ENCODE measurements at regions of chr13 and their contacts with region 1.

Region 1: DNA sequence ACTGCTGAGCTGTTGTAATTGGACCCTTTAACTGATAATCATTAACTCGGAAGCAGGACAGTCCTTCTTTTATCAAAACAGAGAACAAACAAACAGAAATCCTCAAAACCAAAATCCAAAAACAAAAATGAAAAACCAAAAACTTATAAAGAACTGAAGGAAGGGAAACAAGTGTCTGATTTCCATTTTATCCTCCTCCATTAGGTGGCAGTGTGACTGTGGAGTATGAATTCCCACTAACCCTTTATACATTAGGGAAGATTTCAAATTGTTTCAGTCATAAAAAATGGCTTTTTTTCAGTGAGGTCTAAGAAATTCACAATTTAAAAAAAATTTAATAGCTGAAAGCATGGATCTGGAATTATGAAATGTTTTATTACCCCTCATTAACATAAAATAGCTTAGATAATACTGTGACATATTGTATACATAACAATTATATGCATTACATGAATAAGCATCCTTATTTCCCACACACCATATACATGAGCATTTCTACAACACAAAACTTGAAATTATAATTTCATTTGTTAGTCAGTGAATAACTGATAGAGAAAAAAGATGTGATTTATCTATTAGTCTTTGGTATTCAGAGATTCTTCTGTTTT is 1074.3 kb upstream of the PCDH9 start:
- DNase-seq: no peak
- ATAC-seq: peak; percentile 66
- H3K4me3 ChIP-seq: no peak overlapping the region
- H3K27ac ChIP-seq: no peak overlapping the region
- H3K4me1 ChIP-seq: no peaks in the 10 kb centered on the region
- H3K27me3 ChIP-seq: no peaks in the 10 kb centered on the region
- CTCF ChIP-seq: peak; percentile 46 to 60 (median 55); a peak in 5 of 6 replicates
- EP300 ChIP-seq: no peak
- POLR2A ChIP-seq: no peak
- RAD21 ChIP-seq: peak; percentile 67

Region 2: GRCh38 chr13:68345963-68346531 is 41.7 kb after region 1 on chr13:
- CTCF ChIA-PET with region 1: no interaction called
- POLR2A ChIA-PET with region 1: no interaction called
- RAD21 ChIA-PET with region 1: no interaction called
- SMC1A ChIA-PET with region 1: no interaction called
- in situ Hi-C with region 1: no loop called
- intact Hi-C with region 1: no loop called
- DNase-seq: no peak
- ATAC-seq: no peak
- H3K4me3 ChIP-seq: no peak overlapping the region
- H3K27ac ChIP-seq: no peak overlapping the region
- H3K4me1 ChIP-seq: no peaks in the 10 kb centered on the region
- H3K27me3 ChIP-seq: no peaks in the 10 kb centered on the region
- CTCF ChIP-seq: no peak
- EP300 ChIP-seq: no peak
- POLR2A ChIP-seq: no peak
- RAD21 ChIP-seq: no peak

Region 3: GRCh38 chr13:68927387-68928026 is 623.1 kb after region 1 on chr13:
- CTCF ChIA-PET with region 1: interaction called, 13 read pairs
- POLR2A ChIA-PET with region 1: no interaction called
- RAD21 ChIA-PET with region 1: interaction called, 5 read pairs
- SMC1A ChIA-PET with region 1: interaction called, 5 read pairs
- in situ Hi-C with region 1: loop called (anchors 25 kb)
- intact Hi-C with region 1: loop called (anchors 1 kb)
- DNase-seq: no peak
- ATAC-seq: peak; percentile 76
- H3K4me3 ChIP-seq: no peak overlapping the region
- H3K27ac ChIP-seq: no peak overlapping the region
- H3K4me1 ChIP-seq: no peaks in the 10 kb centered on the region
- H3K27me3 ChIP-seq: no peaks in the 10 kb centered on the region
- CTCF ChIP-seq: peak; percentile 29 to 61 (median 58); a peak in 4 of 6 replicates
- EP300 ChIP-seq: no peak
- POLR2A ChIP-seq: no peak
- RAD21 ChIP-seq: peak; percentile 65

Region 4: DNA sequence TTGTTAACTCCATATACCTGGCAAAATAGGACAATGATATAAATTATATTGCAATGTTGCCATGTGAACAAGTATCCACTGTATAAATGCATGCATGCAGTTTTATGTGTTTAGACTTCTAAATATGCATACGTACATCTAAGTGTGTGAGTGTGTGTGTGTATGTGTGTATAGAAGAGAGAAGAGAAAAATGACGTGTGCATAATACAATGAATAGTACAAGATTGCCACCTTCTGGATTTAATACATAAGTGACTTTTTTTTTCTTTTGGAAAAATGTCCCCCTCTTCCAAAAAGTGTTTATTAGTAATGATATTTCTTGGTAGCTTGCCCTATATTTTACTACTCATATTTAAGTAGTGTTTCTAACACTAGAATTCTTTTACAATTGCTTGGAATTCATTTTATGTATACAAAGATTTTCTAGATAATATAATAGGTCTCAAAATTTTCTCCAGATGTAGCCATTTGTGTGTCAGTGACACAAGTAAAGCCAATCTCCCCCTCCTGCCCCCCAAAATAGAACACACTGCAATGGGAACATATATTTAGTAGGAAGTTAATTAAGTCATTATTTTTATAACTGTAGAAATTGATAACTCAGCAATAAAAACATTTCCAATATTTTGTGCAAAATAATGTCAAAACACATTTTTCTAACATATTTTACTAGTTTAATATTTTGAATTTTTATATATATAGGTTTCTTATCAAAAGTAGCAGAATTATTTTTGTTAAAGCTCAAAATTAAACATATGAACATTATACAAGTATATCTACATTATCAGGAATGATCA is 1019.9 kb after region 1 on chr13:
- CTCF ChIA-PET with region 1: interaction called, 4 read pairs
- POLR2A ChIA-PET with region 1: no interaction called
- RAD21 ChIA-PET with region 1: no interaction called
- SMC1A ChIA-PET with region 1: no interaction called
- in situ Hi-C with region 1: no loop called
- intact Hi-C with region 1: loop called (anchors 5 kb)
- DNase-seq: no peak
- ATAC-seq: peak; percentile 30; the same call in 1 of the 3 replicates
- H3K4me3 ChIP-seq: no peak overlapping the region
- H3K27ac ChIP-seq: no peak overlapping the region
- H3K4me1 ChIP-seq: no peaks in the 10 kb centered on the region
- H3K27me3 ChIP-seq: no peaks in the 10 kb centered on the region
- CTCF ChIP-seq: no peak; a peak in 2 of 6 replicates
- EP300 ChIP-seq: no peak
- POLR2A ChIP-seq: no peak
- RAD21 ChIP-seq: peak; percentile 48

Region 5: DNA sequence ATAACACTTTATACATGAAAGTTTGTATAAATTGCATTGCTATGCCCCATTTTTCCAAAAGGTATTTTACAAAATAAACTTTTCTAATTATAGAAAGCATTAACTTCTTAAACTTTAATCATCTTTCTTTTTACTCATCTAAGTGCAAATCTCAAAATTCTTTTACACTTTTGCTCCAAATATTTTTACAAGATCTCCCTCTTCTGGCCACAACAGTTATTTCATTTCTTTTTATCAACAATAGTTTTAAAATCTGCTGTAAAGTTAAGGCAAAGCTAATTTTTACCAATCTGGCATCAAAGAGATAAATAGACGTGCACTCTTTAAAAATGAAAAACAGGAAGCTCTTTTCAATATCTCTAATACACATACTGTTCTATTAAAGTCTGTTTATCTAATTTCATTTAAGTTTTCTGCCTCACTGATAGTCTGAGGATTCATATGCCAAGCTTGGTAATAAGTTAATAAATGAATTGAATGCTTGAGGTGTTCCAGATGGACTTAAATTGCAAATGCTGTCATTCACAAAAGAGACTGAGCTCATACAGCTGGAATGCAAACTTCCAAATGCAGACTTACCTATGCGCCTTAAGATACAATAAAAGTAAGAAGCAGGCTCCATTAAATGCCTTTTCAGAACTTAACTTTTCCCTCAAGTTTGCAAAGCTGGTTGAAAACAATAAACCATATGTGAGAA is 1220.2 kb after region 1 on chr13:
- CTCF ChIA-PET with region 1: no interaction called
- POLR2A ChIA-PET with region 1: no interaction called
- RAD21 ChIA-PET with region 1: no interaction called
- SMC1A ChIA-PET with region 1: no interaction called
- in situ Hi-C with region 1: no loop called
- intact Hi-C with region 1: loop called (anchors 10 kb)
- DNase-seq: no peak
- ATAC-seq: no peak
- H3K4me3 ChIP-seq: no peak overlapping the region
- H3K27ac ChIP-seq: no peak overlapping the region
- H3K4me1 ChIP-seq: no peaks in the 10 kb centered on the region
- H3K27me3 ChIP-seq: no peaks in the 10 kb centered on the region
- CTCF ChIP-seq: peak in 1 of 3 experiments; percentile 6; a peak in 2 of 6 replicates
- EP300 ChIP-seq: no peak
- POLR2A ChIP-seq: no peak
- RAD21 ChIP-seq: no peak

Region 6: DNA sequence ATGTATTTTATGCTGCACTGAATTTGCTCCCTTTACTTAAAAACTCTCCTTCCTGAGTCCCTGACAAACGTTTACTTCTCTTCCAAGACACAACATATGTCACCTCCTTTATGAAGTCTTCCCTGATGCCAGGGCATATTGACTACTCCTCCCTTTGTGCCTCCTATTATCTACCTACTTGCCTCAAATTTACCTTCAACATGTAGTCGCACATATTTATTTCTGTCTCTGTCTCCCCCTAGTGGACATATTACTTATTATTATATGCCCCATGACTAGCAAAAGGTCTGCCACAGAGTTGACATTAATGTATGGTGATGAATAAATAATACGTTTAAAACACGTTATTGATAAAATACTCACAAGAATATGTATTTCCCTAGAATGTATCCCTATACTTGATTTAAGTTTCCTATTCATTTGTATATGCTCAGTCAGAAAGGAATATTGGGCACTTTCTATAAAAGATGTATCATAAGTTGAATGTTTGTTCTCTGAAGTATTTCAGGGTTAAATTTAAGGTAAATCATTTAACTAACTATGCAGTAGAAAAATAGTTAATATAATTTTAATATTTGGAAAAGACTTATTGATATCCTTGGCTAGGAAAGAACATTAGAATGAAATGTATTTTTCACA is 1552.9 kb after region 1 on chr13:
- CTCF ChIA-PET with region 1: no interaction called
- POLR2A ChIA-PET with region 1: no interaction called
- RAD21 ChIA-PET with region 1: no interaction called
- SMC1A ChIA-PET with region 1: no interaction called
- in situ Hi-C with region 1: no loop called
- intact Hi-C with region 1: loop called (anchors 5 kb)
- DNase-seq: peak; percentile 19
- ATAC-seq: peak; percentile 88
- H3K4me3 ChIP-seq: no peak overlapping the region
- H3K27ac ChIP-seq: no peak overlapping the region
- H3K4me1 ChIP-seq: no peaks in the 10 kb centered on the region
- H3K27me3 ChIP-seq: no peaks in the 10 kb centered on the region
- CTCF ChIP-seq: peak; percentile 50 to 65 (median 54); a peak in 5 of 6 replicates
- EP300 ChIP-seq: no peak
- POLR2A ChIP-seq: no peak
- RAD21 ChIP-seq: peak; percentile 88

Measured in GM12878 (cell line).